ENCODE measurements at regions of chr20 and their contacts with region 1.

Region 1: GRCh38 chr20:62500237-62500864 is 24.6 kb upstream of the GATA5 start:
- DNase-seq: peak; percentile 94
- H3K4me3 ChIP-seq: no peak overlapping the region
- H3K27ac ChIP-seq: no peak overlapping the region
- H3K4me1 ChIP-seq: peaks cover 0 to 53% (median 28%) of the 10 kb centered on the region in 6 donors
- H3K27me3 ChIP-seq: peaks cover 0 to 39% (median 14%) of the 10 kb centered on the region in 7 donors
- CTCF ChIP-seq: peak; percentile 80 to 94 (median 90)
- POLR2A ChIP-seq: no peak

Region 2: GRCh38 chr20:62437927-62438326 is 62.4 kb before region 1 on chr20:
- intact Hi-C with region 1: no loop called
- DNase-seq: no peak
- H3K4me3 ChIP-seq: no peak overlapping the region
- H3K27ac ChIP-seq: no peak overlapping the region
- H3K4me1 ChIP-seq: no peaks in the 10 kb centered on the region
- H3K27me3 ChIP-seq: peaks cover 0 to 85% (median 9%) of the 10 kb centered on the region in 7 donors
- CTCF ChIP-seq: no peak
- POLR2A ChIP-seq: no peak

Region 3: DNA sequence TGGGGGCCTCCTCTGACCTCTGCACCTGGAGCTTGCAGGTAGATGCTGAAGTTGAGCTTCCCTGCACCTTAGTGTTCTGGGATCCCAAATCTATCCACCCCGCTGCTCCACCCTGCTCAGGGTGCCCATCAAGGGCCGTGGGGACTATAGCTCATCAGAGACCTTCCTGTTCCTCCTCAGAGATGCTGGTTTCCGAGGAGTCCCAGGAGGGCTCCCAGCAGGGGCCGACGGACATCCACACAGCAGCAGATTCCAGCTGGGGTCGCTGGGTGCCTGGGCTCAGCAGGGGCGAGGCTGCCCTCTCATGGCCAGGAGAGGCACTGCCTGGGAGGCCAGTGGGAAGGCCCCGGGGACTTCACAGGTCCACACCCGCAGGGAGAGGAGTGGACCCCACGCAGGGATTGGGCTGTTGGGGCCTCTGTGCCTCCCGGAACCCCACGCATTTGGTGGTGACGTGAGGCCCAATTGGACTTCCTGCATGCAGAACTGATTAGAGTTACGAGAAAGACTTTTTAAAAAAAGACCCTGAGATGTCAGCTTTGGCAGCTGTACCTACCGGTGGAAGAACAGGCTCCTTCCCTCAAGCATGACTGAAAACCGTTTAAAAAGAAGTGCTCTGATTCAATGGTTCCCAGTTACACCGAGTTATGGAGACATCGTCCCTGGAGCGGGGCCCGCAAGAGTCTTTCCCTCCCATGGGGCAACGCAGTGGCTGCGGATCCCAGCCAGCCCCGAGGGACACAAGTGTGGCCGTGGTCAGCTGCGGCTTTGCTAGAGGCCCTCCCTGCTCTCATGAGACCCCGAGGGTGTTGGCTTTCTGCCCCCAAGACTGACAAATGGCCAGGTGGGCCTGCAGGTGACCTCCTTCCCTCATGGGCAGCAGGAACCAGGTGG is 116.6 kb after region 1 on chr20:
- intact Hi-C with region 1: loop called (anchors 5 kb)
- DNase-seq: peak; percentile 95
- H3K4me3 ChIP-seq: peak overlapping the region in 1 of 8 donors; percentile 27
- H3K27ac ChIP-seq: peak overlapping the region; percentile 43 to 93 (median 82)
- H3K4me1 ChIP-seq: peaks cover 27 to 56% (median 36%) of the 10 kb centered on the region in 6 donors
- H3K27me3 ChIP-seq: no peaks in the 10 kb centered on the region
- CTCF ChIP-seq: peak; percentile 93 to 99 (median 98)
- POLR2A ChIP-seq: no peak

Region 4: DNA sequence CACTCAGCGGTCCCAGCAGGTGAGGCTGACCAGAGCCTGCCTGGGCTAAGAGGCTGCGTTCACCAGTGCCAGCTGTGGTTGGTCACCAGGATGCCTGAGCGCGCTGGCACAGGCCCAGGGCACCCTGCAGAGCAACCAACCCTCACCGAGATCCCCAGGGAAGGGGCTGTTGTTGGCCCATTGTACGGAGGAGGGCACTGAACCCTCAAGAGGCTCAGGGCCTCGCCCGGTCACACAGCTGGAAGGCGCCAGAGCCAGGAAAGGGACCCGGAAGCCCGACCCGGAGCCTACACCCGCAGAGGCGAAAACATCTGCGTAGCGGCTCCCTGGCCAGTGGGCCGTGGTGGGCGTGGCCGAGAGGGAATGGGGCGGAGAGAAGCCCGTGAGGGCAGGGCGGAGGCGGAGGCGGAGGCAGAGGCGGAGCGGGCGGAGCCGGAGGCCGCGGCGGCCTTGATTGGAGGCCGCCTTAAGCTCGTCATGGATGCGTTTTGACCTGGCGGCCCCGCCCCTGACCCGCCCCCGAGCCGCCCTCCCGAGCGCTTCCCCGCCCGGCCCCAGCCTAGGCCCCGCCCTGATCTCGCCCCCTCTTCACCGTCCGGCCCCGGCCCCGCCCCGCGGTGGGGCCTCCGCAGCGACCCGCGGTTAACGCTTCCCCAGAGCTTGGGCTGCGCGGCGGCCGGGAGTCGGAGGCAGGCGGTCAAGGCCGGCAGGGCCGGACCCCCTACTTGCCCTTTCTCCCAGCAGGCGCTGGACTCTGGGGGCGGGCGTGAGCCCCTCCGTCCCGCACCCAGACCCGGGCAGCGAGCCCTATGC is 293.8 kb after region 1 on chr20:
- intact Hi-C with region 1: loop called (anchors 5 kb)
- DNase-seq: peak; percentile 100
- H3K4me3 ChIP-seq: peak overlapping the region; percentile 47 to 73 (median 64)
- H3K27ac ChIP-seq: peak overlapping the region; percentile 89 to 98 (median 94)
- H3K4me1 ChIP-seq: peaks cover 5 to 70% (median 45%) of the 10 kb centered on the region in 6 donors
- H3K27me3 ChIP-seq: no peaks in the 10 kb centered on the region
- CTCF ChIP-seq: peak in 3 of 11 experiments; percentile 22 to 39 (median 24)
- POLR2A ChIP-seq: peak; percentile 62 to 75 (median 62)